Heart left ventricle (tissue), 16 donors: ENCODE measurements at regions of chr10 and their contacts with region 1.

Region 1: DNA sequence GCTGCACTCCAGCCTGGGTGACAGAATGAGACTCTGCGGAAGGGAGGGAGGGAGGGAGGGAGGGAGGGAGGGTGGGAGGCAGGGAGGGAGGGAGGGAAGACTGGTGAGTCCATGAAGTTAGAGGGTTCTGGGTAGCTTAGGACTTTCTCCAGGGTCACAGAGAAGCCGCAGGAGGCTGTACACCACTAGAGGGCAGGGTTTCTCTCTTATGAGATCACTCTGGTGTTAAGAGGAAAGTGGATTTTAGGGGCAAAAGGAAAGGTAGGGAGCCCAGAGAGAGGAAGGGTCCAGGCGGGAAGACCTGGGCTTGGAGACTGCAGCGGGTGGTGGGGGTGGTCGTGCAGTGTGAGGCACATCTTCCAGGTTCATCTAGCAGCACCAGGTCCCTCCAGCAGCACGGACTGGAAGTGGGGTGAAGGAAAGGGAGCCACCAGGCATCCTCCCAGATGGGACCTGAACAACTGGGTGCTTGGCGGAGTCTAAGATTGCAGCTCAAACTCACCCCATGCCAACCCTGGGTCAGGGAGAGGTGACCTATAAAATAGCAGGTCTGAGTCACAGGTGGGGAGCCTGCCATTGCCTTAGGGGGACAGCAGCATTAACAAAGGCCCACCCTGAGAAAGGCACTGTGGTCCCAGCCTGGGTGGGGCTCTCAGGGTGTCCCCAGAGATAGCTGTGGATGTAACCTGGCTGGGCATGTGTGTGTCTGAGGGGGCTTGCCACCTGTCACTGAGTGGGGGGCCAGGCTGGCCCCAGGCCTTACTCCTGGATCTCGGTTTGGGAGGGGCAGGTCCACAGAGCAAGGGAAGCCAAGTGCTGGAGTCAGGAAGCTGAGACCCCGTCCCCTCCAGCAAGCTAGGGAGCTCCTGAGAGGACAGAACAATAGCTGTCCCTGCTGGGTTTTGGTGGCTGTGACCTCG is 48.5 kb upstream of the SLC29A3 start:
- DNase-seq: peak in 2 of 5 donors; percentile 52 to 57
- ATAC-seq: peak; percentile 14 to 32 (median 26)
- H3K4me3 ChIP-seq: no peak overlapping the region
- H3K27ac ChIP-seq: peak overlapping the region in 6 of 12 donors; percentile 74 to 89 (median 84)
- H3K4me1 ChIP-seq: peaks cover 0 to 96% (median 64%) of the 10 kb centered on the region in 12 donors
- H3K27me3 ChIP-seq: no peaks in the 10 kb centered on the region
- CTCF ChIP-seq: peak; percentile 32 to 69 (median 56)
- POLR2A ChIP-seq: no peak

Region 2: GRCh38 chr10:70903262-70903921 is 367.2 kb before region 1 on chr10:
- intact Hi-C with region 1: loop called in 2 of 10 experiments (anchors 5 to 10 kb)
- DNase-seq: peak in 4 of 5 donors; percentile 68 to 79 (median 70)
- ATAC-seq: peak; percentile 61 to 72 (median 64)
- H3K4me3 ChIP-seq: no peak overlapping the region
- H3K27ac ChIP-seq: no peak overlapping the region
- H3K4me1 ChIP-seq: peaks cover 0 to 24% (median 9%) of the 10 kb centered on the region in 12 donors
- H3K27me3 ChIP-seq: no peaks in the 10 kb centered on the region
- CTCF ChIP-seq: peak; percentile 84 to 95 (median 91)
- POLR2A ChIP-seq: no peak

Region 3: DNA sequence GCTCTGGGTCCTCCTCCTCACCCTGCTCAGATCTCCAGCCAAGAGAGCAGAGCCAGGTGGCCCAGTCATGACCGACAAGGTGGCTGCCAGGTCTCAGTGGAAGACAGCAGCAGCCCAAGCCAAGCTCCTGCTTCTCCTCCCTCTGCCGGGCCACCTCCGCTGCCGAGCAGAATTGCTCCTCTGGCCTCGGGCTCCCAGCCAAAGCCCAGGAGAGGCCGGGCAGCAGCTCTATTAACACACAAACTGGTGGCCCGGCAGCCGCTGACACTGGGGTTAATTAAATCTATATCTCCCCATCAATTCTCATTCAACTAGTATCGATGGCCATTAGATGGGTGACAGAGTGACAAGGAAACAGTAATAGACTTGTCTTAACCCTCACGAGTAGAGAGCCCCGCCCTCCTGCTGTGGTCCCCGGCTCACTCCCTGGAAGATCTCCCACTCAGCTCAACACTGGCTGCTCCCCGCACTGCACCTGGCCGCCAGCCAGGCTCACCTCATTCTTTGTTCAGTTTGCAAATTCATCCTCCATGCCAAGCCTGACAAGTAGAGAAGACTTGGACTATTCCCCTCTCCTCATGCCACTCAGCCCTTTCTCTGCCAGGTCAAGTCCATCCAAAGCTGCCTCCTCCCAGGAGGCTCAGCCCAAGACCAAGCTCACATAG is 132.3 kb before region 1 on chr10:
- intact Hi-C with region 1: no loop called
- DNase-seq: peak in 2 of 5 donors; percentile 39 to 52
- ATAC-seq: peak in 2 of 4 donors; percentile 31 to 55
- H3K4me3 ChIP-seq: no peak overlapping the region
- H3K27ac ChIP-seq: no peak overlapping the region
- H3K4me1 ChIP-seq: peaks cover 0 to 11% (median 1%) of the 10 kb centered on the region in 12 donors
- H3K27me3 ChIP-seq: peaks cover 0 to 6% (median 0%) of the 10 kb centered on the region in 9 donors
- CTCF ChIP-seq: no peak
- POLR2A ChIP-seq: no peak

Region 4: GRCh38 chr10:71234970-71235685 is 35.4 kb before region 1 on chr10:
- intact Hi-C with region 1: loop called in 2 of 10 experiments (anchors 5 kb)
- DNase-seq: peak; percentile 82 to 88 (median 84)
- ATAC-seq: peak; percentile 66 to 77 (median 74)
- H3K4me3 ChIP-seq: peak overlapping the region in 5 of 12 donors; percentile 0 to 27 (median 21)
- H3K27ac ChIP-seq: peak overlapping the region in 11 of 12 donors; percentile 35 to 89 (median 64)
- H3K4me1 ChIP-seq: peaks cover 14 to 100% (median 71%) of the 10 kb centered on the region in 12 donors
- H3K27me3 ChIP-seq: no peaks in the 10 kb centered on the region
- CTCF ChIP-seq: no peak
- POLR2A ChIP-seq: no peak

Region 5: GRCh38 chr10:71409516-71410104 is 139.0 kb after region 1 on chr10:
- intact Hi-C with region 1: no loop called
- DNase-seq: no peak
- ATAC-seq: no peak
- H3K4me3 ChIP-seq: no peak overlapping the region
- H3K27ac ChIP-seq: no peak overlapping the region
- H3K4me1 ChIP-seq: no peaks in the 10 kb centered on the region
- H3K27me3 ChIP-seq: no peaks in the 10 kb centered on the region
- CTCF ChIP-seq: no peak
- POLR2A ChIP-seq: no peak